ENCODE measurements at regions of chr19 and their contacts with region 1.

Region 1: DNA sequence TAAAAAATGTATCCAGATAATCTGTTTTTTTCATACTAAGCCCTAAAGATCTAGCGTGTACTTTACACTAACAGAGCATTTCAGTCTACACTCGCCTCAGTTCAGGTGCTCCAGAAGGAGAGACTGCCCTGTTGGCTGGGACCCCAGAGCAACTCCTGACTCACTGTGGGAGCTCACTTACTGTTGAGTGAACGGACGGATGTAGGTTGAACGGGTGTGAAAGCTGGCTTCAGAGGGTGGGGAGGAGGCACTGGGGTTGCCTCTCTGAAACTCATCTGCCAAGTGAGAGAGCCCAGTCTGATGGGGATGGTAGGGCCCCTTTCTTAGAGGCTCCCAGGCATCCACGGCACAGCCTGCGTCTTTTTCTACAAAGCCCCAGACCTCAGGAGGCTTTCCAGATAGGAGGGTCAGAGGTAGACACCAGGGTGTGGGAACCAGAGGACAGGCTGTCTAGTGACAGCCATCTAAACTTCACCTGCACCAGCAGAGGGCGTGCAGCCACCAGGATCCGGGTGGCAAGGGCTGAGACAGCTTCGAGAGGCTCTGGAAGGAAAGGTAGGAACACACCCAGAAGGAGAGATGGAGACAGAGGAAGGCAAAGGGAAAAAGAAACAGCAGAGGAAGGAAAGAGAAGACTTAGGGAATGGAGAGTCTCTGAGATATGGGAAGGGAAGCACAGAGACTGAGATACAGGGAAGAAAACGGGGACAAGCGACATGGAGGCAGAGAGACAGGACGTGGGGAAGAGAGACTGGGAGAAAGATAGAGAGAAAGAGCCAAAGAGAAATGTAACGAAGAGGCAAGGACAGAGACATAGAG is 3.7 kb downstream of the KASH5 start:
- DNase-seq: peak; percentile 86 to 91
- ATAC-seq: peak; percentile 71
- H3K4me3 ChIP-seq: no peak overlapping the region
- H3K27ac ChIP-seq: no peak overlapping the region
- H3K4me1 ChIP-seq: no peaks in the 10 kb centered on the region
- H3K27me3 ChIP-seq: no peaks in the 10 kb centered on the region

Region 2: GRCh38 chr19:49340069-49340864 is 51.5 kb before region 1 on chr19:
- intact Hi-C with region 1: no loop called
- DNase-seq: peak; percentile 81 to 91
- ATAC-seq: peak; percentile 77
- H3K4me3 ChIP-seq: peak overlapping the region; percentile 22
- H3K27ac ChIP-seq: peak overlapping the region in 1 of 2 donors; percentile 69
- H3K4me1 ChIP-seq: no peaks in the 10 kb centered on the region
- H3K27me3 ChIP-seq: no peaks in the 10 kb centered on the region

Region 3: GRCh38 chr19:49421039-49421877 is 29.5 kb after region 1 on chr19:
- intact Hi-C with region 1: no loop called
- DNase-seq: peak; percentile 78 to 88
- ATAC-seq: no peak
- H3K4me3 ChIP-seq: no peak overlapping the region
- H3K27ac ChIP-seq: no peak overlapping the region
- H3K4me1 ChIP-seq: no peaks in the 10 kb centered on the region
- H3K27me3 ChIP-seq: peaks cover 0 to 5% of the 10 kb centered on the region in 2 donors

Region 4: DNA sequence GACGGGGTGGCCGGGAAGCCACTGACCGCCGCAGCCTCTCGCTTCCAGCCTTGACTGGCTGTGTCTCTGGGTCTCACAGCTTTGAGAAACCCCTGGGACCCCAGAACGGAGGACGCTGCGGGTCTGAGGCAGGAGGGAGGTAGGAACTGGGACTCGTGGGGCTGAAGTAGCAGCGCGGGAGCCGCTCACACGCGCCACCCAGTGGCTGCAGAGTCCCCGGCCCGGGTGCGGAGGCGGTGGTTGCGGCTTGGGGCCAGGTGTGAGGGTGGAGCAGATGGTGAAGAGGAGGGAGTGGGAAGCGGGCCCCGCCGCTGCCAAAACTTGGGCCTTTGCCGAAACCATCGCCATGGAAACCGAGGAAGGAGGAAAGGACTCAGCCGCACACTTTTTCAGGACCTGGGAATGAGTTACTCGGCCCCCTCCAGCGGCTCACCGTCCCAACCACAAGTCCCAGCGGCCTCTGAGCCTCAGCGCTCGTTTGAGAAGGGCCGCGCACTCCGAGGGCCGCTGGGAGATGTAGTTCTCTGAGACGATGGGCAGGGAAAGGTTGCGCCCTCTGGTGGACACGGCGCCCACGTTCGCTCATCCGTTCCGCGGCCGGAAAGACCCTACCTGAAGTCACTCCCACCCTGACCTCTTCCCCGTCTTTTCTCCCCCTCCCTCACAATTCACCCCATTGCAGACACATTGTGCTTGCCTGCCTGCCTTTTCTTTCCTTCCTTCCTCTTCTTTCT is 51.7 kb after region 1 on chr19:
- intact Hi-C with region 1: loop called (anchors 1 to 2 kb)
- DNase-seq: peak; percentile 97 to 98
- ATAC-seq: peak; percentile 94
- H3K4me3 ChIP-seq: peak overlapping the region; percentile 15 to 42
- H3K27ac ChIP-seq: peak overlapping the region in 1 of 2 donors; percentile 11
- H3K4me1 ChIP-seq: no peaks in the 10 kb centered on the region
- H3K27me3 ChIP-seq: no peaks in the 10 kb centered on the region

Region 5: DNA sequence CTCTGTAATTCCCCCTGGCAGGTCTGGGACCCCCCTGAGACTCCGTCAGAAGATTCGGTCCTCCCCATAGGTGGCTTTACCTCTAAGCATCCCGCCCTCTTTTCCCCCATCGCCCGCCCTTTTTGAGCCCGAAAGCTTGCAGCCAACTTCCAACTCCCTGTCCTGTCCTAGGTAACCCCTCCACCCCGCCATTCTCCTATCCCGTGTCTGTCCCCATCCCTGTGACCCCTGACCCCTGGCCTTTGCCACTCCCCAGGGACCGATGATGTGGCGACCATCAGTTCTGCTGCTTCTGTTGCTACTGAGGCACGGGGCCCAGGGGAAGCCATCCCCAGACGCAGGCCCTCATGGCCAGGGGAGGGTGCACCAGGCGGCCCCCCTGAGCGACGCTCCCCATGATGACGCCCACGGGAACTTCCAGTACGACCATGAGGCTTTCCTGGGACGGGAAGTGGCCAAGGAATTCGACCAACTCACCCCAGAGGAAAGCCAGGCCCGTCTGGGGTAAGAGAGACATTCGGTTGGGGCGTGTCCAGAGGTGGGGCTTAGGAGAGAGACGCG is 136.5 kb after region 1 on chr19:
- intact Hi-C with region 1: no loop called
- DNase-seq: peak; percentile 74 to 86
- ATAC-seq: peak; percentile 41
- H3K4me3 ChIP-seq: peak overlapping the region; percentile 2 to 36
- H3K27ac ChIP-seq: peak overlapping the region in 1 of 2 donors; percentile 34
- H3K4me1 ChIP-seq: no peaks in the 10 kb centered on the region
- H3K27me3 ChIP-seq: no peaks in the 10 kb centered on the region

Region 6: GRCh38 chr19:49546825-49547565 is 155.2 kb after region 1 on chr19:
- intact Hi-C with region 1: loop called in 1 of 2 experiments (anchors 10 kb)
- DNase-seq: no peak
- ATAC-seq: peak; percentile 88
- H3K4me3 ChIP-seq: no peak overlapping the region
- H3K27ac ChIP-seq: no peak overlapping the region
- H3K4me1 ChIP-seq: no peaks in the 10 kb centered on the region
- H3K27me3 ChIP-seq: no peaks in the 10 kb centered on the region

Region 7: GRCh38 chr19:49560358-49560900 is 168.6 kb after region 1 on chr19:
- intact Hi-C with region 1: loop called in 1 of 2 experiments (anchors 5 kb)
- DNase-seq: peak in 1 of 2 donors; percentile 71
- ATAC-seq: peak; percentile 45
- H3K4me3 ChIP-seq: no peak overlapping the region
- H3K27ac ChIP-seq: no peak overlapping the region
- H3K4me1 ChIP-seq: no peaks in the 10 kb centered on the region
- H3K27me3 ChIP-seq: no peaks in the 10 kb centered on the region

Measured in aorta (tissue), 5 donors.